Vagina (tissue), 2 donors: ENCODE measurements at regions of chr17 and their contacts with region 1.

Region 1: GRCh38 chr17:81512560-81513371 is at the start of gene ACTG1:
- DNase-seq: no peak
- H3K4me3 ChIP-seq: peak within 1 kb of the TSS; percentile 93 to 99
- H3K27ac ChIP-seq: peak within 1 kb of the TSS; percentile 100
- H3K4me1 ChIP-seq: peaks cover 57% of the 10 kb centered on the region
- H3K27me3 ChIP-seq: no peaks in the 10 kb centered on the region
- CTCF ChIP-seq: no peak
- POLR2A ChIP-seq: peak in 1 of 2 donors; percentile 91
- total RNA-seq, gene ACTG1: 2,441 TPM

Region 2: GRCh38 chr17:81397314-81398175 is 115.2 kb before region 1 on chr17:
- intact Hi-C with region 1: loop called (anchors 2 kb)
- DNase-seq: no peak
- H3K4me3 ChIP-seq: peak overlapping the region; percentile 76 to 78
- H3K27ac ChIP-seq: peak overlapping the region; percentile 95
- H3K4me1 ChIP-seq: peaks cover 50% of the 10 kb centered on the region
- H3K27me3 ChIP-seq: no peaks in the 10 kb centered on the region
- CTCF ChIP-seq: no peak
- POLR2A ChIP-seq: no peak

Region 3: DNA sequence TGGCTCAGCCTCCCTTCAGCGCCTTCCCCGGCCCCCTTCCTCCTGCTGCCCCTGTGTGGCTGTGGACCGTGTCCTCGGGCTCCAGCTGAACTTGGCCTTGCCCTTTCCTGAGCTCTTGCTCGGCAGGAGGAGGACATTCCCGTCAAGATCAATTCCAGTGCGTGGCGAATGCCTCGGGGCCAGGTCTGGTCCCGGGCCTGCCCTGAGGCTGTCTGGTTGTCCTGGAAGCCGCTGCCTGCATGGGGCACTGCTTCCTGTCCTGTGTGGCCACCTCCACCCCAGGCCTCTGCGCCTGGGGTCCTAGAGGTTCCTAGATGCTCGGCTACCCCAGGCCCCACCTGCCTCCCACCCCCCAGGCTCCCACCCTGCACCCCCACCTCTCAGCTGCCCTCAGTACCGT is 104.7 kb before region 1 on chr17:
- intact Hi-C with region 1: no loop called
- DNase-seq: no peak
- H3K4me3 ChIP-seq: no peak overlapping the region
- H3K27ac ChIP-seq: no peak overlapping the region
- H3K4me1 ChIP-seq: peaks cover 55% of the 10 kb centered on the region
- H3K27me3 ChIP-seq: no peaks in the 10 kb centered on the region
- CTCF ChIP-seq: no peak
- POLR2A ChIP-seq: no peak

Region 4: DNA sequence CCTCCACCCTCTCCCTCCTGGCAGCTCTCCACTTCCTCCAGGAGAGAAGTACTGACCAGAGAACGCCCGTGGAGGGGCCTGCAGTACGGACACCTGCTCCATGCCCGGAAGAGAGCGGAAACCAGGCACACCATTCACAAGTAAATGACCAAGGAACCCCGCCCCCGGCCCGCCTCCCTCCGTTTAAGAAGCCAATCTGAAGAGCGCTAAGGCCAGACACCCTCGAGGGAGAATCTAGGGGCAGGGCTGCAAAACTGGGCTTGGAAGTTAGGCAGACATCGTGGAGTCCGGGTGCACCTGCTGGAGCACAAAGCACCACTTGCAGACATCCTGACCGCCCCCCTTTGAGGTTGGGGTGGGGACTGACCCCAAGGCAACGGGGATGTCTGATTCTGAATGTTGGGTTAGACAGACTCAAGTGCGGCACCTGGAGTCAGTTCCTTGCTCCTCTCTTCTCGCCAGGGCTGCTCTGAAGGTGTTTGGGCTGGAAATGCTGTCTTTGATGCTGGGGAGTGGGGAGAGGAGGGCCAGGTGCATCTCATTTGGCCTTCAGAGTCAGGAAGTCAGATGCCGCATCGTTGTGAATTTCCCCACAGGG is 40.4 kb after region 1 on chr17:
- intact Hi-C with region 1: loop called (anchors 5 kb)
- DNase-seq: no peak
- H3K4me3 ChIP-seq: peak overlapping the region; percentile 72
- H3K27ac ChIP-seq: peak overlapping the region; percentile 65
- H3K4me1 ChIP-seq: peaks cover 25% of the 10 kb centered on the region
- H3K27me3 ChIP-seq: no peaks in the 10 kb centered on the region
- CTCF ChIP-seq: no peak
- POLR2A ChIP-seq: no peak